Right lobe of liver (tissue), 6 donors: ENCODE measurements at regions of chr12 and their contacts with region 1.

Region 1: GRCh38 chr12:110704748-110705147 is 15.8 kb upstream of the HVCN1 start:
- DNase-seq: peak in 1 of 3 donors; percentile 35
- ATAC-seq: peak; percentile 79 to 94 (median 82)
- H3K4me3 ChIP-seq: no peak overlapping the region
- H3K27ac ChIP-seq: no peak overlapping the region
- H3K4me1 ChIP-seq: no peaks in the 10 kb centered on the region
- H3K27me3 ChIP-seq: no peaks in the 10 kb centered on the region
- CTCF ChIP-seq: peak; percentile 44 to 53 (median 51)
- POLR2A ChIP-seq: no peak

Region 2: DNA sequence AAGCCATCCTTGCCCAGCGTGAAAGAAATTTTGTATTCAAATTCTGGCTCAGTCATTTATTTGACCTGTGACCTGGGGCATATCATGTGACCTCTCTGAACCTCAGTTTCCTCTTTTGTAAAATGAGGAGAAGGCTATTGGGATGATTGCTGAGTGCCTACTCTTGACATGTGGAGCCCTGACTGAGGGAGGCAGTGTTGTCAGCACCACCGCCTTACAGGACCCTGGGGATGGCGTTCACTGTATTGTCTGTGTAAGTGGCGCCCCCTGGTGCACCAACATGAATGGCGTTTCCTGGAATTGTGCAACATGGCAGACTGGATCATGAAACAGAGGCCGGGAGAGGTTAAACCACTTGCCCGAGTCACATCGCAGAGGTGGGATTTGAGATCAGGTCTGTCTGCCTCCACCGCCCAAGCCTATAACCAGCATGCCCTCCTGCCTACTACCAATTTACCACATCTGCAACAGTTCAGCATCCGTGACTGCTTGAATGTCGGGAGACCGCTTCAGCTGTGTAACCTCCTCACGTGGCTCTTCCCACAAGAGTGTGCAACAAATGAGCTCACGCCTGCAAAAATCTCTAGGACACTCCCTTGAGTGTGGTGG is 121.9 kb after region 1 on chr12:
- intact Hi-C with region 1: loop called in 1 of 2 experiments (anchors 5 kb)
- DNase-seq: peak; percentile 75 to 85 (median 77)
- ATAC-seq: peak; percentile 93 to 99 (median 96)
- H3K4me3 ChIP-seq: no peak overlapping the region
- H3K27ac ChIP-seq: no peak overlapping the region
- H3K4me1 ChIP-seq: no peaks in the 10 kb centered on the region
- H3K27me3 ChIP-seq: no peaks in the 10 kb centered on the region
- CTCF ChIP-seq: peak; percentile 75 to 92 (median 83)
- POLR2A ChIP-seq: no peak

Region 3: DNA sequence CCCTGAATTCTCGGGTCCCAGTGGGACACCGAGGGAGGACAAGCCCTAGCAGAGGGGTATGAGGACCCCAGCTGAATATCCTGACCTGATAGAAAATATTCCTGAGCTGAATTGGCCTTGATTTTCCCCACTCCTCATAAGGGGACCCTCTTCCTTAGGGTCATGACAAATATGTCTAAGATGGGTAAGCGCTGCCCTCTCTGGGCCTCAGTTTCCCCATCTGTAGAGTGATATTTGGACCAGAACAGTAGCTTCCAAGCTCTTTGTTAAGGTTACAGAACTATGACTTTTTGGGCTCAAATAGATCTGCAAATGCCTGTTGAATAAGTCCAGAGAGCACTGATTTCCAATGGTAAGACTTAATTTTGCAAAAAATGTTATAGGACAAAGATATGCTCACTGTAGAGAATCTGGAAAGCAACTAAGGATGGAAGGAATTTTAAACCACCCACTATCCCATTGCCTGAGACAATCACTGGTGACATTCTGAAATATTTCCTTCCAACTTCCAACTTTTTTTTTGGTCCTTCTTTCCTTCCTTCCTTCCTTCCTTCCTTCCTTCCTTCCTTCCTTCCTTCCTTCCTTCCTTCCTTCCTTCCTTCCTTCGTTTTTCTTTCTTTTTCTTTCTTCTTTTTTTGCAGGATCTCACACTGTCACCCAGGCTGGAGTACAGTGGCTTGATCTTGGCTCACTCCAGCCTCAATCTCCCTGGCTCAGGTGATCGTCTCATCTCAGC is 183.7 kb after region 1 on chr12:
- intact Hi-C with region 1: loop called in 1 of 2 experiments (anchors 10 kb)
- DNase-seq: no peak
- ATAC-seq: peak in 1 of 4 donors; percentile 8
- H3K4me3 ChIP-seq: no peak overlapping the region
- H3K27ac ChIP-seq: no peak overlapping the region
- H3K4me1 ChIP-seq: no peaks in the 10 kb centered on the region
- H3K27me3 ChIP-seq: no peaks in the 10 kb centered on the region
- CTCF ChIP-seq: no peak
- POLR2A ChIP-seq: no peak